Gastrocnemius medialis (tissue), 4 donors: ENCODE measurements at regions of chr13 and their contacts with region 1.

Region 1: DNA sequence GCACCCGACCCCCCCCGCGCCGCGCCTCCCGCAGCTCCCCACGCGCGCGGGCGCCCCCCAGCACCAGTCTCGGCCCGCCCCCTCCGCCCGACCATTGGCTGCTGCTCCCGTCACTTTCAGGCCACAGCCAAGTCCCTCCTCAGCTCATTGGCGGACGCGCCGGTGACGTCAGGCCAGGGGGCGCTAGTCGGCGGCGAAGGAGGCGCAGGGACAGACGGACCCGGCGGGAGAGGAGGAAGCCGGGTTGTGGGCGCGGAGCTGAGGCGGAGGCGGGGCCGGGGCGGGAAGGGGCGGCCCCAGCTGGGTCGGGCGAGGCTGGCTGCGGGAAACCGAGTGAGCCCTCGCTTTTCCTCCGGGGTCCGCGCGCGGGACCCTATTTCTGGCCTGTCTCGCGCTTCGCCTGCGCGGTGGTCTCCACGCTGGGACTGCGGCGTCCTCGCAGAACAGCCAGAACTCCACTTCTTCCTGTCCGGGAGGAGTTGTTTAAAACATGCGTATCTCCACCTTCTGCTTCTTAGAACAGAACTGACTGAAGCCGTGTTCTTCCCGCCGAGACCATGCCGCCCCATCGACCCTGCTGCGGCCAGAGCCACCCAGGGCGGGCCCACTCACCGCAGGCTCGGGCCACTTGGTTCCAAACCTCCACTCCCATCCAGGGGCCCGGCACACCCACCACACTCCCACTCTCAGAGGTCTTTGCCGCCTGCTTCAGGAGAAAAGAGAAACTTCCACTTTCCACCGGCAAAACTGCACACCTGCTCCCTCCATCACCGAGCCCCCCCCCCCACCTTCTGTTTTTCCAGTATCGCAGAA is 459 bp upstream of the TMTC4 start:
- DNase-seq: peak; percentile 98 to 99
- ATAC-seq: peak; percentile 94 to 95
- H3K4me3 ChIP-seq: peak overlapping the region; percentile 70 to 92 (median 76)
- H3K27ac ChIP-seq: peak overlapping the region; percentile 71 to 83 (median 78)
- H3K4me1 ChIP-seq: peaks cover 4 to 12% of the 10 kb centered on the region in 2 donors
- H3K27me3 ChIP-seq: no peaks in the 10 kb centered on the region
- CTCF ChIP-seq: peak in 2 of 5 experiments; percentile 35 to 40
- POLR2A ChIP-seq: peak; percentile 59 to 79

Region 2: GRCh38 chr13:100088644-100089464 is 586.2 kb before region 1 on chr13 and contains the start of gene PCCA:
- in situ Hi-C with region 1: no loop called
- intact Hi-C with region 1: loop called (anchors 10 kb)
- DNase-seq: peak; percentile 91 to 92
- ATAC-seq: peak; percentile 97 to 98
- H3K4me3 ChIP-seq: peak within 1 kb of the TSS; percentile 77 to 90 (median 82)
- H3K27ac ChIP-seq: peak within 1 kb of the TSS; percentile 74 to 85 (median 83)
- H3K4me1 ChIP-seq: peaks cover 18 to 19% of the 10 kb centered on the region in 2 donors
- H3K27me3 ChIP-seq: no peaks in the 10 kb centered on the region
- CTCF ChIP-seq: peak in 1 of 5 experiments; percentile 1
- POLR2A ChIP-seq: peak; percentile 67
- total RNA-seq, gene PCCA: 7.5 to 19.5 (median 10.8) TPM

Region 3: GRCh38 chr13:100788540-100788939 is 113.5 kb after region 1 on chr13:
- in situ Hi-C with region 1: no loop called
- intact Hi-C with region 1: no loop called
- DNase-seq: no peak
- ATAC-seq: no peak
- H3K4me3 ChIP-seq: no peak overlapping the region
- H3K27ac ChIP-seq: no peak overlapping the region
- H3K4me1 ChIP-seq: no peaks in the 10 kb centered on the region
- H3K27me3 ChIP-seq: peaks cover 0 to 2% (median 0%) of the 10 kb centered on the region in 3 donors
- CTCF ChIP-seq: no peak
- POLR2A ChIP-seq: no peak

Region 4: GRCh38 chr13:101649490-101650126 is 974.6 kb after region 1 on chr13:
- in situ Hi-C with region 1: no loop called
- intact Hi-C with region 1: no loop called
- DNase-seq: no peak
- ATAC-seq: peak; percentile 84 to 90
- H3K4me3 ChIP-seq: no peak overlapping the region
- H3K27ac ChIP-seq: peak overlapping the region in 1 of 4 donors; percentile 46
- H3K4me1 ChIP-seq: no peaks in the 10 kb centered on the region
- H3K27me3 ChIP-seq: no peaks in the 10 kb centered on the region
- CTCF ChIP-seq: no peak
- POLR2A ChIP-seq: no peak